ENCODE measurements at regions of chr13 and their contacts with region 1.

Region 1: DNA sequence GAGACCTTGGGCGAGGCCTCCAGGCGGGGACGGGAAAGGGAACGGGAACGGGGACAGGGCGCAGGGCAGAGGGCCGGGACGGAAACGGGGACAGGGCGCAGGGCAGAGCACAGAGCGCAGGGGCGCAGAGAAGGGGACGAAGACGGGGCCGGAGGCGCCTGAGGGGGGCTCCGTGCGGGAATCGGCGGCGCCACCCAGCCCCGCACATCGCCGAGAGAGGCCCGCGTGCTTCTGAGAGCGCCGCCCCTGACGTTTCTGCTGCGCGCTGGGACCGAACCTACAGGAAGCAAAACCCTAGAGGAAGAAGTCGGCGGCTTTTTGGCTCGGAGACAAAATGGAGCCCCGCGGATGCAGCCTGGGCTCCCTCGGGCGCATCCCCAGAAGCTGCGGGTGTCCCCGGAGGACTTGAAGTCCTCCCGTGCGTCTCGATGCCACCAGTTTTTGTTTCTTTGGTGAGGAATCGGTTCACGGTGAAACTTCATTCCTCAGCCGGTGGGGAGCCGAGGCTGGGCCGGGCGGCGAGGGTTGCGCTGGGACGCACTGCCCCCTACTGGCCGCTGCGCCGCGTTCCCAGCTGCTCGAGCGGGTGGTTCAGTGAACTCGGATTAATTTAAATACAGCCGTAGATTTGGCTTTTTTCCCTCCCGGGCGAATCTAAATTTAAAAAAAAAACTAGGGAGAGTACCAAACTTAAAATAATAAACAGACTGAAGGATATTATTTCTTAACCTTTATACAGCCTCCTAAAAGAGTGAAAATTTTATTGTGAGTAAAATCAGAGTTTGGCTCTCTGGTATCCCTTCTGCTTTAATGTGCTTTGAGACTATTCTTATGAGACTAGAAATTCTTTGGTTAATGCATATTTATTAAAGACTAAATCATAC is 350.0 kb upstream of the ARGLU1 start:
- DNase-seq: peak; percentile 78
- ATAC-seq: peak; percentile 90 to 93

Region 2: GRCh38 chr13:106484537-106485193 is 433.2 kb before region 1 on chr13:
- intact Hi-C with region 1: no loop called
- DNase-seq: peak; percentile 51
- ATAC-seq: peak; percentile 63 to 86

Region 3: DNA sequence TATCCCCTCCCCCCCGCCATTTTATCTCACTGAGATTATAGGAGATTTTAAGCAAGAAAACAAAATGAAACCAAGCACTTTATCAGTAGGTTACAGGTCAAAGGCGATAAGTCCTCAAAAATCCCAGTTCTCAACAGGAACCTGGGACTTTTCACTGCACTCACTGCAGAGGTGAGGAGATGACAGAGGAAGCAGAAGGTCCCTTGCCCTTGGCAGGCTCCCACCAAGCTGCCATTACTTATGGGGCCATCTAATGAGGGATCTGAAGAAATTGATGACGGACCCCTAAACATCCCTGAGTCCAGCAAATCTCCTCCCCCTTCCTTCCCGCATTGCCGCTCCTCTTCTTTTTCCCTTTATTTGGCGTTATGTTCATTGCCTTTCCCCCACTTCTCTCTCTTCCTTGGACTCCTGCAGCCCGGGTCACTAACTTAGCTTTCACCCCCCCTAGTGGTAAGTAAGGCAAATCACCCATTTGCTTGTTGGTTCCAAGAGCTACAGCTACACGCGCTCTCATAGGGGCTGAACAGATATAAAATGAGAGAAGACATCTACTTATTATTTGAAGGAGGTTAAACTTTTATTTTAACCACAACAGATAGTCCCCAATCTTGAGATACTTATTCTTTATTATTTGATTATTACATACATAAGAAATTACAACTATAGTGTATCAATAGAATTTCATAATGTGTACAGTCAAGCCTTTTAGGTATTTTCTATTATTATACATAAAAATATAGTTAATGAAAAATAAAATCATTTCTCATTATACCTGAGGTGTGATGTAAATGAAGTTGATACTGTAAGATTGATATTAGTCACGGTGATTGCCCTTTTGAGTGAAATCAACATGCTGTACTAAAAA is 298.0 kb before region 1 on chr13:
- intact Hi-C with region 1: loop called in 1 of 2 experiments (anchors 10 kb)
- DNase-seq: peak; percentile 43
- ATAC-seq: peak; percentile 94 to 96

Region 4: GRCh38 chr13:106709522-106709921 is 208.4 kb before region 1 on chr13:
- intact Hi-C with region 1: loop called in 1 of 2 experiments (anchors 10 kb)
- DNase-seq: no peak
- ATAC-seq: peak; percentile 79 to 94

Measured in left cardiac atrium (tissue), 4 donors.